GM12878 (cell line): ENCODE measurements at regions of chr11 and their contacts with region 1.

Region 1: DNA sequence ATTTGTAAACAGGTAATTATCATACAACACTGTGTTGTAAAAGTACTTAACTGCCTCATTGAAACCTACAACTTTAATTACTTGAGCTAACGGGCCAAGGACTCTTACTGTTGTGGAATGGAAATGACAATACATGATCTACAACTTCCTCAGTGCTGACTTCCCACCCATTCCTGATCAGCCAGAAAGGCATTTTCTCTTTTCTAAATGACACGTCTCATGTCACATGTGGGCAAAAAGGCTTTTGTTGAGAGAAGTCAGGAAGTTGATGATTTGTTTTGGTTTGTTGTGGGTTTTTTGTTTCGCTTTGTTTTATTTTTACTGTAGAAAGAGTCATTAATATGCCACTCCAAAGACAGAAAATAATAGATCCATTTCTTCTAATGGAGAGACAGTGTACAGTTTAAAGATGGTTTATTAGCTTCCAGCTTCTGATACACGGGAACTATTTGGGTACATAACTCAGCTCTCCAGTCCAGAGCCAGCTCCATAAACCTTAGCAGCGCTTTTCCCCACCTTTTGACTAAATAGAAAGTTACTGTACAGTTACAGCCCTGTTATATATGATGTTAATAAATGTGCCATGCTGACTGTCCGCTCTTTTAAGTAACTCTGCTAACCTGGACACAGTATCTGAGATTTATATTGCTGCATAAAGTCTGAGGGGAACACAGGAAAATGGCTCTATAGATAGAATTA is 509.4 kb upstream of the API5 start:
- DNase-seq: no peak
- ATAC-seq: peak; percentile 63
- H3K4me3 ChIP-seq: no peak overlapping the region
- H3K27ac ChIP-seq: no peak overlapping the region
- H3K4me1 ChIP-seq: no peaks in the 10 kb centered on the region
- H3K27me3 ChIP-seq: no peaks in the 10 kb centered on the region
- CTCF ChIP-seq: no peak
- EP300 ChIP-seq: no peak
- POLR2A ChIP-seq: no peak
- RAD21 ChIP-seq: no peak

Region 2: DNA sequence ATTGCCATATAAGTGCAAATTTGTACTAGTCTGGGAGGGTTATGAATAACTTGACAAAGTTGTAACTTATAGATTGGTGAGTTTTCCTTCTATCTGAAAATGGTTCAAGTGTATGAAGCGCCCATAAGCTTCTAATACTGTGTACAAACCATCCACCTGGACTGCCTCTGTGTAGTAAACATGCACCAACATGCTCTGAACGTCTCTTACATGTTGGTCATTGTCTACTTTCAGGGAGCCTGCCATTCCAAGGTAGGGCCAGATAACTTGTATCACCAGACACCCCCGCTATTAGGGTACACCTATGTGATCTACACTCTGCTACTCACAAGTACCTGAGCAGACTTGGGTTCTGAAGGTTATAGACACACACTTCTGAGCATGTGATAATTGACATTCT is 226.0 kb before region 1 on chr11:
- CTCF ChIA-PET with region 1: no interaction called
- POLR2A ChIA-PET with region 1: no interaction called
- RAD21 ChIA-PET with region 1: no interaction called
- SMC1A ChIA-PET with region 1: no interaction called
- in situ Hi-C with region 1: no loop called
- intact Hi-C with region 1: no loop called
- DNase-seq: no peak
- ATAC-seq: no peak
- H3K4me3 ChIP-seq: no peak overlapping the region
- H3K27ac ChIP-seq: no peak overlapping the region
- H3K4me1 ChIP-seq: no peaks in the 10 kb centered on the region
- H3K27me3 ChIP-seq: no peaks in the 10 kb centered on the region
- CTCF ChIP-seq: no peak
- EP300 ChIP-seq: no peak
- POLR2A ChIP-seq: no peak
- RAD21 ChIP-seq: no peak

Region 3: GRCh38 chr11:42709216-42709615 is 93.1 kb before region 1 on chr11:
- CTCF ChIA-PET with region 1: no interaction called
- POLR2A ChIA-PET with region 1: no interaction called
- RAD21 ChIA-PET with region 1: no interaction called
- SMC1A ChIA-PET with region 1: no interaction called
- in situ Hi-C with region 1: no loop called
- intact Hi-C with region 1: no loop called
- DNase-seq: no peak
- ATAC-seq: no peak
- H3K4me3 ChIP-seq: no peak overlapping the region
- H3K27ac ChIP-seq: no peak overlapping the region
- H3K4me1 ChIP-seq: no peaks in the 10 kb centered on the region
- H3K27me3 ChIP-seq: no peaks in the 10 kb centered on the region
- CTCF ChIP-seq: no peak
- EP300 ChIP-seq: no peak
- POLR2A ChIP-seq: no peak
- RAD21 ChIP-seq: no peak

Region 4: DNA sequence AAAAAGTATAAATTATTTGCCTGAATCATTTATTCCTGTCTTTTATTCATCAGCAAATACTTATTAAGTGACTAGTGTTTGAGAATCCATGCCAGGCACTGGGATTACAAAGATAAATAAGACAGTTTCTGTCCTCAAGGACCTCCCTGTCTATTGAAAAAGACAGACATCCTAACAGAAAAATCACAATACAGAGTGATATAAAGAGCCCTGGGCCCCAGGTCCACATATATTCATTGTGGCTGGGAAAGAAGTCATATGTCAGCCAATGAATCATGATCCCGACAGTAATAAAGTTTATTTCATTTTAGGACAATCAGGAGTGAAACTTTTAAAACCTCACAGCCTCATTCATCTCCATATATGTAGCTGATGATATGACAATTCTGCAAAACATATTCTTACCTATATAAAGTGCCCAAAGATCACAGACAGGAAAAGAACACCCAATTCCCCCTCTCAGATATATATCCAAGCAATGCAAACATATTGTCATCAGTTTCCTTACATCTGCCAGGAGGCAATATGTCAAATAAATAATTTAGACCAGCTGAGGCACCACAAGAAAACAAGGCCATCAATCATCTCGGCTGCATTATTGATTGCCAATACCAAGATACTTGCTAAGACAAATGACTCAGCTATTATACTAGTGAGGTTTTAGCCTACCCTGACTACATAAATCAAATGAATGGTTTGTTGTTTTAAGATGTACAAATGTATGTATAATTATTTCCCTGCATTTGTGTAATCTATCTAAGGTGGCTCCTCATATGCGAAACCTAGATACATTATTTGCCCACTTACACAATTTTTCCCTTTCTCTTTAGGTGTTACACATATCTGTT is 81.4 kb before region 1 on chr11:
- CTCF ChIA-PET with region 1: no interaction called
- POLR2A ChIA-PET with region 1: no interaction called
- RAD21 ChIA-PET with region 1: no interaction called
- SMC1A ChIA-PET with region 1: no interaction called
- in situ Hi-C with region 1: no loop called
- intact Hi-C with region 1: no loop called
- DNase-seq: no peak
- ATAC-seq: no peak
- H3K4me3 ChIP-seq: no peak overlapping the region
- H3K27ac ChIP-seq: no peak overlapping the region
- H3K4me1 ChIP-seq: no peaks in the 10 kb centered on the region
- H3K27me3 ChIP-seq: no peaks in the 10 kb centered on the region
- CTCF ChIP-seq: no peak
- EP300 ChIP-seq: no peak
- POLR2A ChIP-seq: no peak
- RAD21 ChIP-seq: no peak

Region 5: DNA sequence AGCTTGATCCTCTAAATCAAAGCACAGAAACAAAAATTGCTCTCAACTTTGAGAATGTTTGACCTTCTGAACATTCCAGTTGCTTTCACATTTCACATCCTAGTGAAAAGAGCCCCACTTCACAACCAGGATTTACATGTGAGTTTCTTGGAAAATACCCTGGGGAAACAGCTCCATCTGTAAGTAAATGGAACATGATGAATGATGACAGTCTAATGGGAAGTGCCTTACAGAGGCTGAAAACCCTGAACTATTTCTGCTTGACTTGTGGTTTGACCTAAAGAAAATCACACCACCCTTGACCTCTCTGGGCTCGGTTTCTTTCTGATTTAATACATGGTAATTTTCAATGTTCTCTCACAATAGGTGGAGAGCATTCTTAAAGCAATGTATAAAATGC is 10.0 kb after region 1 on chr11:
- CTCF ChIA-PET with region 1: interaction called, 4 read pairs
- POLR2A ChIA-PET with region 1: no interaction called
- RAD21 ChIA-PET with region 1: interaction called, 3 read pairs
- SMC1A ChIA-PET with region 1: interaction called, 18 read pairs
- in situ Hi-C with region 1: no loop called
- intact Hi-C with region 1: no loop called
- DNase-seq: no peak
- ATAC-seq: peak; percentile 48; the same call in 2 of the 3 replicates
- H3K4me3 ChIP-seq: no peak overlapping the region
- H3K27ac ChIP-seq: no peak overlapping the region
- H3K4me1 ChIP-seq: no peaks in the 10 kb centered on the region
- H3K27me3 ChIP-seq: no peaks in the 10 kb centered on the region
- CTCF ChIP-seq: no peak
- EP300 ChIP-seq: no peak
- POLR2A ChIP-seq: no peak
- RAD21 ChIP-seq: no peak

Region 6: DNA sequence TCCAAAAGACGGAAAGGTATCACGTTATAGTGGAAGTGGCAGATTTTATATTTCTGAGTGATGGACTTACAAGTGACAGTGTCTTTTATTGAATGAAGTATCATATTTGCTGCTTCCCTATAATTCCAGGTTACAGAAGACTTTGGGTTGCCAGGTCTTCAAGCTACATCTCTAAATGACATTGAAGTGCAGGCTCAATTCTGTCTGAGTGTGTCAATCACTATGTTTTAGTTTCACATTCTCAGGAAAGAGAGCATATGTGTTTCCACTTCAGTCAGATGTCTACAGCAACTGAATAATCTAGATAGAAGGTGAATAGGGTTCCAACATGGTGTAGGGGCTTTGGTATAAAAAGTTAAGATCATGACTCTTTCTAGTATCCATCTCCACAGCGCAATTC is 16.8 kb after region 1 on chr11:
- CTCF ChIA-PET with region 1: no interaction called
- POLR2A ChIA-PET with region 1: no interaction called
- RAD21 ChIA-PET with region 1: interaction called, 4 read pairs
- SMC1A ChIA-PET with region 1: interaction called, 18 read pairs
- in situ Hi-C with region 1: no loop called
- intact Hi-C with region 1: no loop called
- DNase-seq: no peak
- ATAC-seq: no peak; the same call in 2 of the 3 replicates
- H3K4me3 ChIP-seq: no peak overlapping the region
- H3K27ac ChIP-seq: no peak overlapping the region
- H3K4me1 ChIP-seq: no peaks in the 10 kb centered on the region
- H3K27me3 ChIP-seq: no peaks in the 10 kb centered on the region
- CTCF ChIP-seq: no peak
- EP300 ChIP-seq: no peak
- POLR2A ChIP-seq: no peak
- RAD21 ChIP-seq: no peak